Left cardiac atrium (tissue), 4 donors: ENCODE measurements at regions of chr5 and their contacts with region 1.

Region 1: DNA sequence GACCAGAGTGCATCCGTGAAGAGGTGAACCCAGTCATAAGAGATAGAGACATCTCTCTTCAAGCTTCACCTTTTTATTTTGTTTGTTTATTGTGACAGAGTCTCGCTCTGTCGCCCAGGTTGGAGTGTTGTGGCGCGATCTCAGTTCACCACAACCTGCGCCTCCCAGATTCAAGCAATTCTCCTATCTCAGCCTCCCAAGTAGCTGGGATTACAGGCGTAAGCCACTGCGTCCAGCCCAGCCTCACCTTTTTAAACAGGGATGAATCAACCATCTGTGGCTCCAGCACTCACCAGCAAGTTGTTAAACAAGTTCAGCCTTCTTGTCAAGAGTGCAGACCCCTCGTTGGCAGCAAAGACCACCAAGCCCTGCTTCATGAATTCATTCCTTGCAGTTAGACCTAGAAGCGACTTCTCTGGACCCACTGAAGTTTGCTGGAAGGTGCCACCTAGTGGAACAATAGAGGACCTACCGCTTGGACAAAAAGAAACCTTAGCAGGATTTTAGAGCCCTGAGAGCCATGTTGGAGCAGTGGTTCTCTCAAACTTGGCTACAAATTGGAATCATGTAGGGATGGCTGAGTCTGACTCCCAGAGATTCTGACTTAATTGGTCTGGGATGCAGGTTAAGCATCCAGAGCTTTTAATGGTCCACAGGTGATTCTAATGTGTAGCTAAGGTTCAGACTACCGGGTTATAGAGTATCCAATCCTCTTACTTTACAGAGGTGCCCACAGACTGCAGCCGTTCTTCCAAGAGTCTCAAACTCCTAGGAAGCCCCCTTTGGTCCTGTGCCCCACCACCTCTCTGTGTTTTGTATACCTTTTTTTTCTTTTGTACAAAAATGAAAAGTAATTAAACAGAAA is 10.5 kb upstream of the GALNT10 start:
- DNase-seq: no peak
- ATAC-seq: peak; percentile 80 to 82

Region 2: DNA sequence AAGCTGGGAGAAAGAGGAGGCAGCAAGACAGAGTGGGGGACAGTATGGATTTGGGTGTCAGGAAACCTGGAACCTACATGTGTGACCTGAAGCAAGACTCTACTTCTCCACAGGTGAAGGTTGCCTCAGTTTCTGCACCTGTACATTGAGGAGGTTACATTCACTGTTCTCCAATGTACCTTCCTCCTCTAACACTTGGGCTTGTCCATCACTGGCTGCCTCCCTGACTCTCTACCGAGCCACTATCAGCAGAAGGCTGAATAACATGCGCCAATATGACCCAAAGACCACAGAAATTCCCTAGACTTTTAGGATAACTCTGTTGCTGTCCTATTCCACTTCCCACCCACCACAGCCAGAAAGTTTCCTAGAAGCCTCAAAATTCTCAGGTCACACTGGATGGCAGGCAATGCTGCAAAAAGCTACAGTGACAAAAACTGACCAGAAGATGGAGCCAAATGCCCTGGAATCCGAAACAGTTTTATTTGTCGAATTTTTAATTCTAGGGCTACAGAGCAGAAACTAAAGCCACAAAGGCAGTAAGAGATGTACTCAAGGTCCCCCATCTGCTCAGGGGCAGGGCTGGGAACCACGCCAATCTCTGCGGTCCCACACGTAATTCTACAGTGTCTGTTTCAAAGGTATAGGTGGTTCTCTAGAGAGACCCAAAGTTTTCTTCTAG is 205.8 kb before region 1 on chr5:
- intact Hi-C with region 1: loop called (anchors 2 to 5 kb)
- DNase-seq: no peak
- ATAC-seq: peak; percentile 44 to 56

Region 3: DNA sequence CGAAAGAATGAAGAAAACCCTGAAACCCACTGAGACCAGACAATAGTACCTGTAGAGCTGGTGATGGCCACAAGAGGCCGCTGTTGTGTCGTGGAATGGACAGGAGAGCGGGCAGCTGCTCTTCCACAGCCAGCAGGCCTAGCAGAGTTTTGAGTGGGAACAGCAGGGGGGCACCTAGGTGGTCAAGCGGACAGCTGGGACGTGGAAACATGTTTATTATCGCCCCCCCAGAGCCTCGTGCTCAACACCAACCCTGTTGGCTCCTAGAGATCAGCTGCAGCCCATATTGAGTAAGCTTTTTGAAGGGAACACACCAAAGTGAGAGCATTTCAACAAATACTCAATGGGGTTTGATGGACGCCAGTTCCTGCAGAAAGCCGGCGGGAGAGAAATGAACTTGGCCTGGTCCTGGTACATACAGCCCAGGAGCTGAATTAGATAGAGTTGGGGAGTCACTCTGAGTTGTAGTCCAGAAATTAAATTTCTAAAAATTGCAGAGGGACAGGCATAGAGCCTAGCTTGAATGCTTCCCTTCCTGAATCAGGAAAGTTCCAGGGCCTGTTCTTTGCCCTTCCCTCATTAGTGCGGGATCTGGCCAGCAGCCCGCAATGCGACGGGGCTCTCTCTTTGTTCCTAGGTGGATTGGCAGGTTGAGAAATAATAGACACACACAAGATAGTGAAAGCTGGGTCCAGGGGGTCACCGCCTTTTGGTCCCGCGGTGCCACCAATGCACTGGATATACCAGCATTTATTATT is 107.5 kb before region 1 on chr5:
- intact Hi-C with region 1: loop called (anchors 2 to 5 kb)
- DNase-seq: peak; percentile 81
- ATAC-seq: peak; percentile 93 to 94

Region 4: GRCh38 chr5:154367101-154367500 is 187.0 kb after region 1 on chr5:
- intact Hi-C with region 1: no loop called
- DNase-seq: no peak
- ATAC-seq: no peak

Region 5: GRCh38 chr5:155451106-155451505 is 1271.0 kb after region 1 on chr5:
- intact Hi-C with region 1: no loop called
- DNase-seq: no peak
- ATAC-seq: no peak